ENCODE measurements at regions of chr4 and their contacts with region 1.

Region 1: GRCh38 chr4:125244848-125245450 is 69.8 kb upstream of the FAT4 start:
- DNase-seq: no peak
- ATAC-seq: no peak
- H3K4me3 ChIP-seq: no peak overlapping the region
- H3K27ac ChIP-seq: no peak overlapping the region
- H3K4me1 ChIP-seq: no peaks in the 10 kb centered on the region
- H3K27me3 ChIP-seq: no peaks in the 10 kb centered on the region
- CTCF ChIP-seq: peak in 7 of 9 donors; percentile 35 to 67 (median 55)

Region 2: GRCh38 chr4:124322234-124323065 is 922.5 kb before region 1 on chr4:
- intact Hi-C with region 1: loop called in 1 of 10 experiments (anchors 5 kb)
- DNase-seq: no peak
- ATAC-seq: peak in 1 of 8 donors; percentile 57
- H3K4me3 ChIP-seq: peak overlapping the region in 6 of 10 donors; percentile 5 to 26 (median 26)
- H3K27ac ChIP-seq: no peak overlapping the region
- H3K4me1 ChIP-seq: peaks cover 0 to 3% (median 0%) of the 10 kb centered on the region in 9 donors
- H3K27me3 ChIP-seq: no peaks in the 10 kb centered on the region
- CTCF ChIP-seq: peak; percentile 29 to 74 (median 65)

Region 3: GRCh38 chr4:125179727-125180126 is 65.2 kb before region 1 on chr4:
- intact Hi-C with region 1: no loop called
- DNase-seq: no peak
- ATAC-seq: no peak
- H3K4me3 ChIP-seq: no peak overlapping the region
- H3K27ac ChIP-seq: no peak overlapping the region
- H3K4me1 ChIP-seq: no peaks in the 10 kb centered on the region
- H3K27me3 ChIP-seq: no peaks in the 10 kb centered on the region
- CTCF ChIP-seq: no peak

Region 4: GRCh38 chr4:125313497-125313896 is 68.5 kb after region 1 on chr4:
- intact Hi-C with region 1: no loop called
- DNase-seq: peak in 1 of 2 donors; percentile 72
- ATAC-seq: no peak
- H3K4me3 ChIP-seq: peak overlapping the region in 2 of 10 donors; percentile 96 to 97
- H3K27ac ChIP-seq: peak overlapping the region in 7 of 10 donors; percentile 90 to 97 (median 96)
- H3K4me1 ChIP-seq: peaks cover 0 to 35% (median 16%) of the 10 kb centered on the region in 9 donors
- H3K27me3 ChIP-seq: peaks cover 0 to 55% (median 0%) of the 10 kb centered on the region in 7 donors
- CTCF ChIP-seq: peak; percentile 64 to 91 (median 84)

Measured in heart right ventricle (tissue), 16 donors.